Natural killer cell (primary cell): ENCODE measurements at regions of chr12 and their contacts with region 1.

Region 1: GRCh38 chr12:120580787-120581723 is at the start of gene POP5:
- DNase-seq: peak; percentile 90 to 98
- ATAC-seq: peak; percentile 92 to 98 (median 96)
- H3K4me3 ChIP-seq: peak within 1 kb of the TSS; percentile 86
- H3K4me3 Mint-ChIP-seq: peak within 1 kb of the TSS; percentile 93
- H3K27ac ChIP-seq: peak within 1 kb of the TSS; percentile 44
- H3K27ac Mint-ChIP-seq: peak within 1 kb of the TSS; percentile 88 to 94
- H3K4me1 ChIP-seq: peaks cover 32% of the 10 kb centered on the region
- H3K4me1 Mint-ChIP-seq: peaks cover 30 to 36% of the 10 kb centered on the region in 2 donors
- H3K27me3 ChIP-seq: peaks cover 3% of the 10 kb centered on the region
- H3K27me3 Mint-ChIP-seq: peaks cover 4 to 12% of the 10 kb centered on the region in 2 donors
- CTCF ChIP-seq: no peak
- total RNA-seq, gene POP5: 38.7 to 54.3 (median 42.9) TPM

Region 2: GRCh38 chr12:120534203-120534702 is 46.8 kb before region 1 on chr12 and contains the start of gene RNF10:
- intact Hi-C with region 1: loop called (anchors 5 kb)
- DNase-seq: peak; percentile 69 to 92
- ATAC-seq: peak; percentile 71 to 85 (median 80)
- H3K4me3 ChIP-seq: peak within 1 kb of the TSS; percentile 46
- H3K4me3 Mint-ChIP-seq: peak within 1 kb of the TSS; percentile 97
- H3K27ac ChIP-seq: peak within 1 kb of the TSS; percentile 40
- H3K27ac Mint-ChIP-seq: peak within 1 kb of the TSS; percentile 92 to 97
- H3K4me1 ChIP-seq: peaks cover 47% of the 10 kb centered on the region
- H3K4me1 Mint-ChIP-seq: peaks cover 46 to 53% of the 10 kb centered on the region in 2 donors
- H3K27me3 ChIP-seq: no peaks in the 10 kb centered on the region
- H3K27me3 Mint-ChIP-seq: no peaks in the 10 kb centered on the region
- CTCF ChIP-seq: no peak
- total RNA-seq, gene RNF10: 371 to 488 (median 389) TPM

Region 3: GRCh38 chr12:120710031-120710804 is 129.2 kb after region 1 on chr12 and contains the start of gene UNC119B:
- intact Hi-C with region 1: loop called (anchors 1 kb)
- DNase-seq: peak; percentile 67 to 85
- ATAC-seq: peak; percentile 89 to 92 (median 91)
- H3K4me3 ChIP-seq: peak within 1 kb of the TSS; percentile 56
- H3K4me3 Mint-ChIP-seq: peak within 1 kb of the TSS; percentile 90
- H3K27ac ChIP-seq: peak within 1 kb of the TSS; percentile 39
- H3K27ac Mint-ChIP-seq: peak within 1 kb of the TSS; percentile 71 to 87
- H3K4me1 ChIP-seq: peaks cover 22% of the 10 kb centered on the region
- H3K4me1 Mint-ChIP-seq: peaks cover 25 to 27% of the 10 kb centered on the region in 2 donors
- H3K27me3 ChIP-seq: no peaks in the 10 kb centered on the region
- H3K27me3 Mint-ChIP-seq: no peaks in the 10 kb centered on the region
- CTCF ChIP-seq: no peak
- total RNA-seq, gene UNC119B: 10.7 to 11.6 (median 11.6) TPM

Region 4: DNA sequence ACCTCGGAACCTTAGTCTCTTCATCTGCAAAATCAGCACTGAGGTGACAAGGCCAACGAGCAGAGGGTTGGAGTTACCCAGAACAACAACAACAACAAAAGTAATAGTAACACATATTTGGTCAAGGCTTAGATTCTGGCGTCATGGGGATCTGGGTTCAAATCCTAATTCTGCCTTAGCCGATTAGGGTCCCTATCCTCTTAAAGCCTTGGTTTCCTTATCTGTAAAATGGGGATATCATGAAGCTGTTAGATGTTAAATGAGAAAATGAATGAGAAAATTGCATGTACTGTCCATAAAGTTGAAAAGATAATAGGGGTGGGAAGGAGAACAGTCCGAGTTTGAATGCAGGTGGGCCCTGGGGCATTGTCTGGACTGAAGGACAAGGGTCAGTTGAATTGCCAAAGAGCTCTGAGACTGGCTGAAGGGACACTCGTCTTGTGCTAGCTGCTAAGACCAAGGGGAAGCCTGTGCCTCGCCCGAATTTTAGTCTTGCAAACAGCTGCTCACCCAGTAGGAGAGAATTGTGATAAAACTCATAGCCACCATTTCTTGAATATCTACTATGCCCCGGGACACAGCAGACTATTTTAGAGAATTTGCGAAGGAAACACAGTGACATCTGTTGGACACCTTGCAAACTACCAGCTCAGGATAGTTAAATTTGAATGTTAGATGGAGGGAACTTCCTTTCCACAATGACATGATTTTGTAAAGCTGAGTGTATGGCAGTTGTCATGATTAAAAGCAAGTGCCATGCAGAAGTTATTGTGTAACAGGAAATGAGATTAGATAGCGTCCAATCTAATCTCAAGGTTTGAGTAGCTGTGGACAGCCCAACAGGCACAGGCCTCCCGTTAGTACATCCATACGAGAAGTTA is 390.5 kb after region 1 on chr12:
- intact Hi-C with region 1: loop called (anchors 5 kb)
- DNase-seq: peak in 1 of 2 donors; percentile 79
- ATAC-seq: peak; percentile 87 to 91 (median 88)
- H3K4me3 ChIP-seq: no peak overlapping the region
- H3K4me3 Mint-ChIP-seq: no peak overlapping the region
- H3K27ac ChIP-seq: no peak overlapping the region
- H3K27ac Mint-ChIP-seq: no peak overlapping the region
- H3K4me1 ChIP-seq: no peaks in the 10 kb centered on the region
- H3K4me1 Mint-ChIP-seq: peaks cover 0 to 5% of the 10 kb centered on the region in 2 donors
- H3K27me3 ChIP-seq: no peaks in the 10 kb centered on the region
- H3K27me3 Mint-ChIP-seq: no peaks in the 10 kb centered on the region
- CTCF ChIP-seq: peak; percentile 59

Region 5: GRCh38 chr12:121110211-121110940 is 529.3 kb after region 1 on chr12:
- intact Hi-C with region 1: loop called (anchors 2 kb)
- DNase-seq: peak; percentile 63 to 90
- ATAC-seq: peak; percentile 79 to 92 (median 85)
- H3K4me3 ChIP-seq: no peak overlapping the region
- H3K4me3 Mint-ChIP-seq: no peak overlapping the region
- H3K27ac ChIP-seq: no peak overlapping the region
- H3K27ac Mint-ChIP-seq: peak overlapping the region in 1 of 2 donors; percentile 65
- H3K4me1 ChIP-seq: no peaks in the 10 kb centered on the region
- H3K4me1 Mint-ChIP-seq: peaks cover 6% of the 10 kb centered on the region in 2 donors
- H3K27me3 ChIP-seq: no peaks in the 10 kb centered on the region
- H3K27me3 Mint-ChIP-seq: peaks cover 0 to 3% of the 10 kb centered on the region in 2 donors
- CTCF ChIP-seq: peak; percentile 98